ENCODE measurements at regions of chr20 and their contacts with region 1.

Region 1: DNA sequence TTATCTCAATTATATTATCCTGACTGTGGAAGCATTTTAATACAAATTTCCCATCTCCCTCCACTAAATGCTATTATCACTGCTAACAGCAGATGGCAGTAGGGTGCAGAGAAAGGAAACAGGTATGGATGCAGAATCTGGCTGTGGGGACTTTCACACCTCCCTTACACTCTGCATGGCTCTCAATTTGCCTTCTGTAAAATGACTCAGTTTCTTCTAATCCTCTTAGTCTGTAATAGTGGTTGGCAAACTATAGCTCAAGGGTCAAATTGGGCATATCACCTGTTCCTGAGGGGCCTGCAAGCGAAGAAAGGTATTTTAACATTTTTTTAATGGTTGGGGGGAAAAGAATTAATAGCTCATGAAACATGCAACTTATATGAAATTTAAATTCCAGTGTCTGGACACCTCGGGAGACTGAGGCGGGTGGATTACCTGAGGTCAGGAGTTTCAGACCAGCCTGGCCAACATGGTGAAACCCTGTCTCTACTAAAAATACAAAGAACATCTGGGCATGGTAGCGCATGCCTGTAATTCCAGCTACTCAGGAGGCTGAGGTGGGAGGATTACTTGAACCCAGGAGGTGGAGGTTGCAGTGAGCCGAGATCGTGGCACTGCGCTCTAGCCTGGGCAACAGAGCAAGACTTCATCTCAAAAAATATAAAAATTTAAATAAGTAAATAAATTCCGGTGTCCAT is 83.5 kb downstream of the ZMYND8 start:
- DNase-seq: peak; percentile 46
- ATAC-seq: peak; percentile 59
- H3K4me3 ChIP-seq: no peak overlapping the region
- H3K27ac ChIP-seq: 0 out of 2 replicates have a peak overlapping the region, but pooled peaks have one; percentile 15
- H3K4me1 ChIP-seq: peaks cover 28% of the 10 kb centered on the region
- H3K27me3 ChIP-seq: no peaks in the 10 kb centered on the region
- CTCF ChIP-seq: peak; percentile 77 to 94 (median 81); a peak in 5 of 6 replicates
- EP300 ChIP-seq: no peak
- POLR2A ChIP-seq: no peak
- RAD21 ChIP-seq: peak; percentile 97

Region 2: GRCh38 chr20:47196091-47197081 is 76.7 kb before region 1 on chr20:
- CTCF ChIA-PET with region 1: interaction called, 72 read pairs
- POLR2A ChIA-PET with region 1: interaction called, 5 read pairs
- RAD21 ChIA-PET with region 1: interaction called, 24 read pairs
- SMC1A ChIA-PET with region 1: interaction called, 19 read pairs
- in situ Hi-C with region 1: no loop called
- intact Hi-C with region 1: loop called (anchors 5 kb)
- DNase-seq: peak; percentile 19
- ATAC-seq: peak; percentile 86
- H3K4me3 ChIP-seq: no peak overlapping the region
- H3K27ac ChIP-seq: no peak overlapping the region
- H3K4me1 ChIP-seq: peaks cover 17% of the 10 kb centered on the region
- H3K27me3 ChIP-seq: peaks cover 0 to 1% of the 10 kb centered on the region in 2 experiments; a peak in 1 of 4 replicates
- CTCF ChIP-seq: peak; percentile 91 to 97 (median 95)
- EP300 ChIP-seq: no peak
- POLR2A ChIP-seq: no peak
- RAD21 ChIP-seq: peak; percentile 95

Region 3: DNA sequence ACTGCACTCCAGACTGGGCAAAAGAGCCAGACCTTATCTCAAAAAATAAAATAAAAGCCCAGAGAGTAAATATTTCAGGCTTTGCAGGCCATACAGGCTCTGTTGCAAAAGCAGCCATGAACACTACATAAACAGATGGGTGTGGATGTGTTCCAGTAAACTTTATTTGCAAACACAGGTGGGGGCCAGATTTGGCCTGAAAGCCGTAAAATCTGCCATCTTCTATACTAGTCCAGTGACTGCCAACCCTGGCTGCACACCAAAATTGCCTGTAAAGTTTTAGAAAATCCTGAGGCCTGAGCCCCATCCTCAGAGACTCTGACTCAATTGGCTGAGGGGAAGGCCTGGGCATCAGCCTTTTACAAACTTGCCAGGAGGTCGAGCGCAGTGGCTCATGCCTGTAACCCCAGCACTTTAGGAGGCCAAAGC is 20.1 kb before region 1 on chr20:
- CTCF ChIA-PET with region 1: interaction called, 148 read pairs
- POLR2A ChIA-PET with region 1: interaction called, 4 read pairs
- RAD21 ChIA-PET with region 1: interaction called, 21 read pairs
- SMC1A ChIA-PET with region 1: interaction called, 55 read pairs
- in situ Hi-C with region 1: no loop called
- intact Hi-C with region 1: no loop called
- DNase-seq: no peak
- ATAC-seq: no peak
- H3K4me3 ChIP-seq: no peak overlapping the region
- H3K27ac ChIP-seq: no peak overlapping the region
- H3K4me1 ChIP-seq: no peaks in the 10 kb centered on the region
- H3K27me3 ChIP-seq: no peaks in the 10 kb centered on the region
- CTCF ChIP-seq: no peak
- EP300 ChIP-seq: no peak
- POLR2A ChIP-seq: no peak
- RAD21 ChIP-seq: no peak

Region 4: DNA sequence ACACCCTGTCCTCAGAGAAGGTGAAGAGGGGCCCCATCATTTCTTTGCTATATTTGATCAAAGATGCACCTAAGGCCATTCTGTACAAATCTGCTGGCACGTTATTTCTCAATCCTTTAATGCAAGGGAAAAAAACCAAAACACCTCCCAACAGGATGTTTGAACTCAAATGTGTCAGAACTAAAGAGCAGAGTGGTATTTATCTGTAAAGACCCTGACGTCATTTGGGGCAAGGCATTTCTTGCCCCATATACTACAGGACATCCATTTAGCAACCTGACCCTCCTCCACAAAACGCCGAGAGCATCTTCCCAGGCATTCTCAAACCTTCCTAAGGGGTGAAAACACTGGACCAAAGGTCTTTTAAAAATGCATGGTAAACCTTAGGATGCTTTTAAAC is 32.6 kb after region 1 on chr20:
- CTCF ChIA-PET with region 1: interaction called, 11 read pairs
- POLR2A ChIA-PET with region 1: interaction called, 5 read pairs
- RAD21 ChIA-PET with region 1: interaction called, 3 read pairs
- SMC1A ChIA-PET with region 1: interaction called, 3 read pairs
- in situ Hi-C with region 1: no loop called
- intact Hi-C with region 1: no loop called
- DNase-seq: no peak
- ATAC-seq: no peak
- H3K4me3 ChIP-seq: no peak overlapping the region
- H3K27ac ChIP-seq: no peak overlapping the region
- H3K4me1 ChIP-seq: no peaks in the 10 kb centered on the region
- H3K27me3 ChIP-seq: no peaks in the 10 kb centered on the region
- CTCF ChIP-seq: no peak
- EP300 ChIP-seq: no peak
- POLR2A ChIP-seq: no peak
- RAD21 ChIP-seq: no peak

Region 5: DNA sequence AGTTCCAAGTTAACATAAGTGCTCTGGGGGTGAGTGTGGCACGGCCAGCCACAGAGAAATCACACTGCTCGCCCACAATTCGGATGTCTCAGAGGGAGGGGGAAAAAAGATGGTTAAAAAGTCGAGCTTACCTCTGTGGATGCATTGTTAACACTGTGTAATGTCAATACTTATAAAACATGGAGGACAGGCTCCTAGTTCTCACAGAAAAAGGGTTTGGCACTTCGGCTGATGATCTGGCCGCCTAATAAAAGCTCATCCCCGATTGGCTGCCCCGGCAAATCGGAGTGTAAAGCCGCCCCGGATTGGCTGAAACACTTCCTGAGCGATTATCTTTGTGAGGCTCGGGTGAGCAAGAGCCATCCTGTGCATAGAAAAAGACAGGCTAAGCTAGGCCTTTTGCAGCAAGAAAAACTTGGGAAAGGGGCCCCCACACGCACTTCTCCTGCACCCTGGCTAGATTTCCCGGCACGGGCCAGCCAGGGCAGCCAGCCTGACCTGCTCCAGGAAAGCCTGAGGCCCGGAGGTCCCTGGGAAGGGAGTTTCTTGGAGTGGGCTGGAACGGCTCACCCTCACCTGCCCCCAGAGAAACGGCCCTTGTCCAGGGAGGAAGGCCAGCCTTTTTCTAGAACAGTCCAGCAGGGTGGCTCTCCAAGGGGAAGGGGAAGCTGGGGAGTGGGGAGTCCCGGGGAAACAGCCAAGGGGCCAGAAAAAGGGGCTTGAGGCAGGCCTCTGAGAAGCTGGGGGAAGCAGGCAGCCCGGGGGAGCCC is 83.7 kb after region 1 on chr20 and contains the start of gene ZMYND8:
- CTCF ChIA-PET with region 1: interaction called, 129 read pairs
- POLR2A ChIA-PET with region 1: interaction called, 30 read pairs
- RAD21 ChIA-PET with region 1: interaction called, 123 read pairs
- SMC1A ChIA-PET with region 1: interaction called, 72 read pairs
- in situ Hi-C with region 1: no loop called
- intact Hi-C with region 1: loop called (anchors 5 kb)
- DNase-seq: peak; percentile 95
- ATAC-seq: peak; percentile 73
- H3K4me3 ChIP-seq: peak within 1 kb of the TSS; percentile 77
- H3K27ac ChIP-seq: peak within 1 kb of the TSS; percentile 99
- H3K4me1 ChIP-seq: peaks cover 46% of the 10 kb centered on the region
- H3K27me3 ChIP-seq: no peaks in the 10 kb centered on the region
- CTCF ChIP-seq: no peak
- EP300 ChIP-seq: no peak
- POLR2A ChIP-seq: no peak
- RAD21 ChIP-seq: no peak
- polyA plus RNA-seq, gene ZMYND8: 12.9 to 18.4 TPM

Region 6: GRCh38 chr20:47397652-47398301 is 124.7 kb after region 1 on chr20:
- CTCF ChIA-PET with region 1: no interaction called
- POLR2A ChIA-PET with region 1: no interaction called
- RAD21 ChIA-PET with region 1: no interaction called
- SMC1A ChIA-PET with region 1: no interaction called
- in situ Hi-C with region 1: no loop called
- intact Hi-C with region 1: no loop called
- DNase-seq: no peak
- ATAC-seq: no peak
- H3K4me3 ChIP-seq: no peak overlapping the region
- H3K27ac ChIP-seq: no peak overlapping the region
- H3K4me1 ChIP-seq: peaks cover 1% of the 10 kb centered on the region
- H3K27me3 ChIP-seq: no peaks in the 10 kb centered on the region
- CTCF ChIP-seq: no peak
- EP300 ChIP-seq: no peak
- POLR2A ChIP-seq: no peak
- RAD21 ChIP-seq: no peak

Region 7: DNA sequence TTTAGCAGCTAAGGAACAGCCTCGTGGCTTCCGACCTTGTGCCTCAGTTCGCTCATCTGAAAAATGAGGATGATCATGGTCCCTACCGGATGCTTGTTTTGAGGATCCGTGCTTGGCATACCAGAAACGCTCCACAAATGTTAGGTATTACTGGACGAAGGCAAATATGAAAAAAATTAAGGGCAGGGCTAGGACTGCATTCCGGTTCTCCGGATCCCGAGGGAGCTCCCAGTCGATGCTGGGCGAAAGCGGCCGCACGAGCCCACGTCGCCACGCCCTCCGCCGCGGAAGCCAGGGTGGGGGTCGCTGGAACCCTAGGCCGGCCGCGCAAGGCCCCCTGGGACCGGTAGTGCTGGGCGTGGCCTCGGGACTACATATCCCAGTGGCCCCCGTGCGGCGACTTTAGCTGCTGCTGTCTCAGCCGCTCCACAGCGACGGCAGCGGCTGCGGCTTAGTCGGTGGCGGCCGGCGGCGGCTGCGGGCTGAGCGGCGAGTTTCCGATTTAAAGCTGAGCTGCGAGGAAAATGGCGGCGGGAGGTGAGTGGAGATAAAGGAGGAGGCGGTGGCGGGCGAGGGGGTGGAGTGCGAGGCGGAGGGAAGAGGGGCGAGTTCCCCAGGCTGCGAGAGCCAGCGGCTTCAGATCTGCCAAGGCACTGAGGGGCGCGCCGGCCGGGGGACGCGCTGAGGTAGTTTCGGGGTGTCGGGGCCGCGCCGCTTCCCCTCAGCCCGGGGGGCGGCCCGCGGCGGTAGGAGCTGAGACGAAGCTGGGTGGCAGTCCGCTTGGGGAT is 228.6 kb after region 1 on chr20 and contains the start of gene NCOA3:
- CTCF ChIA-PET with region 1: no interaction called
- POLR2A ChIA-PET with region 1: interaction called, 3 read pairs
- RAD21 ChIA-PET with region 1: interaction called, 10 read pairs
- SMC1A ChIA-PET with region 1: no interaction called
- in situ Hi-C with region 1: no loop called
- intact Hi-C with region 1: no loop called
- DNase-seq: no peak
- ATAC-seq: peak; percentile 82
- H3K4me3 ChIP-seq: peak within 1 kb of the TSS; percentile 94
- H3K27ac ChIP-seq: peak within 1 kb of the TSS; percentile 92
- H3K4me1 ChIP-seq: peaks cover 30% of the 10 kb centered on the region
- H3K27me3 ChIP-seq: no peaks in the 10 kb centered on the region
- CTCF ChIP-seq: peak; percentile 15 to 43 (median 20); a peak in 3 of 6 replicates
- EP300 ChIP-seq: peak in 1 of 2 experiments; percentile 67; a peak in 2 of 4 replicates
- POLR2A ChIP-seq: peak; percentile 98
- RAD21 ChIP-seq: peak; percentile 24; the same call in 1 of the 2 replicates
- polyA plus RNA-seq, gene NCOA3: 16.9 to 18.0 TPM

Region 8: DNA sequence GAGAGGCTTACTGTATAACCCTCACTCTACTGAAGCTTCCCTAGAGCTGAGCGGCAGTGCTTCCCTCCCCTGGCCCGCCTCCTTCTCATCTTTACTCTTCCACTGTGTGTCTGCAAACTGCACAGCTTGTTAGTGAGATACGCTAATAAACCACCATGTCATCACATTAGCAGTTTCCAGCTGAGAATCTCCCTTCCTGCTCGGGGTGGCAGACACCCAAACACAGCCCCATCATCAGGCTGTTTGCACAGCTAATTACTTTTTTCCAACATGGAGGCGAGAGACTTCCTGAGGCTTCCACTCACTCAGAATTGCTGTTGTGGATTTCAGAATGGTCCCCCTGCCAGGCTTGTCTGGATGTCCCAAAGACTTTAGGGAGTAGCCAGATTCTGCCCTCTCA is 957.2 kb after region 1 on chr20:
- CTCF ChIA-PET with region 1: no interaction called
- POLR2A ChIA-PET with region 1: no interaction called
- RAD21 ChIA-PET with region 1: no interaction called
- SMC1A ChIA-PET with region 1: no interaction called
- in situ Hi-C with region 1: no loop called
- intact Hi-C with region 1: no loop called
- DNase-seq: no peak
- ATAC-seq: no peak
- H3K4me3 ChIP-seq: no peak overlapping the region
- H3K27ac ChIP-seq: no peak overlapping the region
- H3K4me1 ChIP-seq: no peaks in the 10 kb centered on the region
- H3K27me3 ChIP-seq: no peaks in the 10 kb centered on the region; a peak in 1 of 4 replicates
- CTCF ChIP-seq: no peak
- EP300 ChIP-seq: no peak
- POLR2A ChIP-seq: no peak
- RAD21 ChIP-seq: no peak

Measured in GM12878 (cell line).